PC-3 (cell line): ENCODE measurements at regions of chr18 and their contacts with region 1.

Region 1: GRCh38 chr18:66495844-66496243 is 108.0 kb downstream of the CDH19 start:
- DNase-seq: peak; percentile 80
- ATAC-seq: peak; percentile 99
- H3K4me3 ChIP-seq: no peak overlapping the region
- H3K27ac ChIP-seq: no peak overlapping the region
- H3K4me1 ChIP-seq: no peaks in the 10 kb centered on the region
- H3K27me3 ChIP-seq: no peaks in the 10 kb centered on the region
- CTCF ChIP-seq: peak; percentile 84

Region 2: GRCh38 chr18:65725251-65726050 is 770.4 kb before region 1 on chr18:
- CTCF ChIA-PET with region 1: no interaction called
- POLR2A ChIA-PET with region 1: no interaction called
- intact Hi-C with region 1: loop called (anchors 5 kb)
- DNase-seq: peak; percentile 73
- ATAC-seq: peak; percentile 87
- H3K4me3 ChIP-seq: peak overlapping the region; percentile 16; the same call in 1 of the 2 replicates
- H3K27ac ChIP-seq: no peak overlapping the region
- H3K4me1 ChIP-seq: no peaks in the 10 kb centered on the region
- H3K27me3 ChIP-seq: no peaks in the 10 kb centered on the region
- CTCF ChIP-seq: peak; percentile 80

Region 3: DNA sequence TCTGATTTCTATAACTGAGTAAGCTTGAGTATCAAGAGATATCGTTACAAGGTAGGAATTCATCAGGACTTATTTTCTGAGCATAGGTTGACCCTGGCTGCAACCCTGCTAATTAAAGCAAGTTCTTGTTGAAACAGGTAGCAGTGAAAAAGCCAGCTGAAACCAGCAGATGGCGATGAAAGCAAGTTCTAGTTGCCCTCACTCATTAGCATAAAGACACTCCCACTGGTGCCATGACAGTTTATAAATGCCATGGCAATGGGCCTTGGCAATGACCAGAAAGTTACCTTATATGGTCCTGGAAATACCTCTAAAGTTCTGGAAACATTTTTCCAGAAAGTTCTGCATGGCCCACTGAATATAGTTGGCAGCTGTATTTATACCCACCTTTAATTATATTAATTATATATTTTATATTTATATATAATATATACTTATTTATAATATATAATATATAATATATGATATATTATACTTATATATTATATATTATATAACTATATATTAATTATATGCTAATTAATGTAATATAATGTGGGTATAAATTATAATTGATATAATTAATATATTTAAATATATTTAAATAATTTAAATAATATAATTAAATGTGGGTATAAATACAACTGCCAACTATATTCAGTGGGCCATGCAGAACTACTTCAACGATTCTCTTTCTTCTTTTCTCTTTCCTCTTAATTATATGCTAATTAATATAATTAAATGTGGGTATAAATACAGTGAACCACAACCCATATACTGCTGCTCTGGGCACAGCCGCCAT is 557.1 kb before region 1 on chr18:
- CTCF ChIA-PET with region 1: interaction called, 6 read pairs
- POLR2A ChIA-PET with region 1: no interaction called
- intact Hi-C with region 1: loop called (anchors 1 kb)
- DNase-seq: peak; percentile 80
- ATAC-seq: peak; percentile 71
- H3K4me3 ChIP-seq: no peak overlapping the region
- H3K27ac ChIP-seq: no peak overlapping the region
- H3K4me1 ChIP-seq: no peaks in the 10 kb centered on the region
- H3K27me3 ChIP-seq: no peaks in the 10 kb centered on the region
- CTCF ChIP-seq: peak; percentile 71

Region 4: DNA sequence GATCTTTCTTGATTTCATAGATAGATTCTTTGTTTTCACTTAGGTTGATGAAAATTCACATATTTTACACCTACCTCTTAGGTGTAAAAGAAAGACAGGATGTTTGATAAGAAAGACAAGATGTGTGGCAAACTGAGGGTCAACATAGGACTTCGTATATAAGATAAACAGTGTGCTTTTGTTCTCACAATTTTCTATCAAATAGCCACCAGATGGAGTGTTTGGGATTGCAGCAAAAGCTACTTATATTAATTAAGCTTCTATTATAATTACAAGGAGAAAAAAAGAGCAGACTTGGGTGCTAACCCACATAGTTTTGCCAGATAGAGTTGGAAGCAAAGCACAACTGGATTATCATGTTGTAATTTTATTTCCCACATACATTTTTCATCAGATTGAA is 512.1 kb before region 1 on chr18:
- CTCF ChIA-PET with region 1: interaction called, 9 read pairs
- POLR2A ChIA-PET with region 1: no interaction called
- intact Hi-C with region 1: loop called (anchors 1 kb)
- DNase-seq: peak; percentile 30
- ATAC-seq: no peak
- H3K4me3 ChIP-seq: no peak overlapping the region
- H3K27ac ChIP-seq: no peak overlapping the region
- H3K4me1 ChIP-seq: no peaks in the 10 kb centered on the region
- H3K27me3 ChIP-seq: no peaks in the 10 kb centered on the region
- CTCF ChIP-seq: peak; percentile 54

Region 5: GRCh38 chr18:66083078-66083477 is 412.8 kb before region 1 on chr18:
- CTCF ChIA-PET with region 1: no interaction called
- POLR2A ChIA-PET with region 1: no interaction called
- intact Hi-C with region 1: no loop called
- DNase-seq: no peak
- ATAC-seq: peak; percentile 22; the same call in 1 of the 2 replicates
- H3K4me3 ChIP-seq: no peak overlapping the region
- H3K27ac ChIP-seq: no peak overlapping the region
- H3K4me1 ChIP-seq: no peaks in the 10 kb centered on the region
- H3K27me3 ChIP-seq: no peaks in the 10 kb centered on the region
- CTCF ChIP-seq: no peak

Region 6: DNA sequence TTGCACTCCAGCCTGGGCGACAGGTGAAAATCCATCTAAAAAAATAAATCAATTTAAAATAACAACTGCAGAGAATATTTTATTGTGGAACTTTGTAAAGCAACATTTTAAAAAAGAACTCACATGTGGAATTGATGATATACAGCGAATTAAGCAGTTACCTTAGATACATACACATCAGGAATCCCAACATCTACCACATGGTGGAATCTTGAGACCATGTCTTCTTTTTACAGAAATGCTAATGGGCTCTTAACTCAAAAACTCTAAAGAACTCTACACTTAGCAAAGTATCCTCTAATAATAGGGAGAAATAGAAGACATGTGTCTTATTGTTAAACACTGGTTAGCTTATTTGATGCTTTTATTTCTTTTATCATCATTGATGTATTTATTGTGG is 371.4 kb before region 1 on chr18:
- CTCF ChIA-PET with region 1: no interaction called
- POLR2A ChIA-PET with region 1: no interaction called
- intact Hi-C with region 1: loop called (anchors 5 kb)
- DNase-seq: peak; percentile 15
- ATAC-seq: peak; percentile 37; the same call in 1 of the 2 replicates
- H3K4me3 ChIP-seq: no peak overlapping the region
- H3K27ac ChIP-seq: no peak overlapping the region
- H3K4me1 ChIP-seq: no peaks in the 10 kb centered on the region
- H3K27me3 ChIP-seq: no peaks in the 10 kb centered on the region
- CTCF ChIP-seq: peak; percentile 47

Region 7: DNA sequence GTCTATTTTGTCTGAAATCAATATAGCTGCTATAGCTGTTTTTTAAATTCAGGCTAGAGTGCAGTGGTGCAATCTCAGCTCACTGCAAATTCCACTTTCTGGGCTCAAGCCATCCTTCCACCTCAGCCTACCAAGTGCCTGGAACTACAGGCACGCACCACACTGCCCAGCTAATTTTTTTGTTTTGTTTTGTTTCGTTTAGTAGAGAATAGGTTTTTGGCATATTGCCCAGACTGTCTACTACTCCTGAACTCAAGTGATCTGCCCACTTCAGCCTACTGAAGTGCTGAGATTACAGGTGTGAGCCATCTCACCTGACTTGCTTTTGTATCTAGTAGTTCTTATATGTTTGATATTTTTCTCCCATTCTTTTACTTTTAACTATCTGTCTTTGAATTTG is 151.6 kb before region 1 on chr18:
- CTCF ChIA-PET with region 1: interaction called, 3 read pairs
- POLR2A ChIA-PET with region 1: no interaction called
- intact Hi-C with region 1: loop called (anchors 1 kb)
- DNase-seq: no peak
- ATAC-seq: no peak
- H3K4me3 ChIP-seq: no peak overlapping the region
- H3K27ac ChIP-seq: no peak overlapping the region
- H3K4me1 ChIP-seq: no peaks in the 10 kb centered on the region
- H3K27me3 ChIP-seq: no peaks in the 10 kb centered on the region
- CTCF ChIP-seq: no peak

Region 8: GRCh38 chr18:66523219-66523991 is 27.6 kb after region 1 on chr18:
- CTCF ChIA-PET with region 1: no interaction called
- POLR2A ChIA-PET with region 1: no interaction called
- intact Hi-C with region 1: no loop called
- DNase-seq: peak; percentile 8
- ATAC-seq: peak; percentile 24; the same call in 1 of the 2 replicates
- H3K4me3 ChIP-seq: no peak overlapping the region
- H3K27ac ChIP-seq: no peak overlapping the region
- H3K4me1 ChIP-seq: no peaks in the 10 kb centered on the region
- H3K27me3 ChIP-seq: no peaks in the 10 kb centered on the region
- CTCF ChIP-seq: no peak

Region 9: GRCh38 chr18:66749030-66749429 is 253.2 kb after region 1 on chr18:
- CTCF ChIA-PET with region 1: no interaction called
- POLR2A ChIA-PET with region 1: no interaction called
- intact Hi-C with region 1: loop called (anchors 1 kb)
- DNase-seq: peak; percentile 50
- ATAC-seq: peak; percentile 69
- H3K4me3 ChIP-seq: no peak overlapping the region
- H3K27ac ChIP-seq: no peak overlapping the region
- H3K4me1 ChIP-seq: no peaks in the 10 kb centered on the region
- H3K27me3 ChIP-seq: peaks cover 2% of the 10 kb centered on the region; the same call in 1 of the 2 replicates
- CTCF ChIP-seq: peak; percentile 65